Activated naive CD4-positive, alpha-beta T cell treated with anti-CD3 and anti-CD28 coated beads for 36 hours (primary cell): ENCODE measurements at regions of chr10 and their contacts with region 1.

Region 1: DNA sequence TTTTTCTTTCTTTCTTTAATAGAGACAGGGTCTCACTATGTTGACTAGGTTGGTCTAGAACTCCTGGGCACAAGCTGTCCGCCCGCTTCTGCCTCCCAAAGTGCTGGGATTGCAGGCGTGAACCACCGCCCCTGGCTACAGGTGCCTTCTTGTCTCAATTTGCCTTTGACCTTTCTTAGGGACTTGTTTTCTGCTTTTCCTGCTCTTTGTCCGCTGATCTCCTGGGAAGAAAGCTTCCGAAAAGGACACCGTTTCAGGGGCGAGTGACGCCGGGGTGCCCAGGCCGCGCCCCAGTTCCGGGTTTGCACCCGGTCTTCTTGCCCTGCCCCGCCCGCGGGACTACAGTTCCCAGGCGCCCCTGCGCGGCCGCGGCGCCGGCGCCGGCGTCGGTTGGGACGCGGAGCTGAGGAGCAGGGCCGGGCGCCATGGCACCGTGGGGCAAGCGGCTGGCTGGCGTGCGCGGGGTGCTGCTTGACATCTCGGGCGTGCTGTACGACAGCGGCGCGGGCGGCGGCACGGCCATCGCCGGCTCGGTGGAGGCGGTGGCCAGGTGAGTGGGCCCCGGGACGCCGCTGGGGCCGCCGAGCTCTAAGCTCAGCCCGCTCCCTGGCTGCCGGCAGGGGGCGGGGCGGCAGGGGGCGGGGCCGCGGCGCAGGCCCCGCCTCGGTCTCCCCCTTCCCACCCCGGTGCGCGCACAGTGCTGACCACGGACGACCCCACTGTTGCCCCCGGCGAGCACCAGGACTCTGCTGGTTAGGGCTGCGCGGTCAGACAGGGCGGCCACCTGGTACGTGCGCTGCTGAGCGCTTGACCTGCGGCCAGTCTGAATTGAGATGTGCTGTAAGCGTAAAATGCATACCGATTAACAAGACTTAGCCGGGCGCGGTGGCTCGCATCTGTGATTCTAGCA is at the start of gene LHPP:
- DNase-seq: peak; percentile 90
- H3K4me3 Mint-ChIP-seq: peak within 1 kb of the TSS; percentile 77
- H3K27ac Mint-ChIP-seq: peak within 1 kb of the TSS; percentile 88
- H3K4me1 Mint-ChIP-seq: peaks cover 27% of the 10 kb centered on the region
- H3K27me3 Mint-ChIP-seq: peaks cover 2% of the 10 kb centered on the region
- total RNA-seq, gene LHPP: 17.7 TPM

Region 2: DNA sequence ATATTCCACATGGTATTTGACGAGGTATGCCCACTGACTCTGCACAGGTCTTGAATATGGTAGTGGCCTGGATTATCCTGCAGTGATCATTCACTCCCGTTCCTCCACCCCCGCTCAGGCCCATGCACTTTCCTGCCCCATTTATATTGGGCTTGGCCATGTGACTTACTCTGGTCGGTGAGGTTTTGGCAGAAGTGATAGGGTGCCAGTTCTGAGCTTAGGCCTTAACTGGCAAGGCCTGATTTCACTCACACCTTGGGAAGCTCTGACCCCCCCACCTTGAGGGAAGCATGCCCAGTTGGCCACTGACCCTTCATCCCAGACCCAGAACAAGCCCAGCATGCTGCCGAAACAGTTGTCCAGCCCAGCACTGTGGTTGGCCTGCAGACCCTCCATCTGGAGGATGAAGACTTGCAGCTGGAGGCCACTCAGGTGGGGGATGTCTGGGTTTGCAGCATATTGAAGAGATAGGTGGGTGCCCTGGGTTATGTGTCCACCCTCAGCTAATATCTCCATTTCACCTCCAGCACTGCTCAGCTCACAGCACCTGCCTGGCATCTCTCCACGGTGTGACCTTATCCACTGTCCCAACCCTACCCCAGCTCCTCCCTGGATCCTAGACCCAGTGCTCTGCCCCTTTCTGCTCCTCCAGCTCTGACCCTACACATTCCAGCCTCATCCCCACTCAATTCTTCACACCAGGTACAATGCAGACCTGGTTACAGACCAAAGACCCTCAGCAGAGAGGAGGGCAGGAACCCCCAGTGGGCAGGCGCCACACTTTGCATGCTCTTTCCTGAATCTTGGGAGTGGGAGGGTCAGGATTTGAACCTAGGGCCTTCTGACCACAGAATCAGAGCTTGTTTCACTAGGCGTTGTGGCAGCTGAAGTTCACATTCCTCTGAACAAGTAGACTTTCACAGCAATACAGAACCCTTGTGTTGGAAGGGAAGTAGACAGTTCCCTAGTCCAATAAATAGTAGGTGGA is 230.2 kb before region 1 on chr10:
- CTCF ChIA-PET with region 1: no interaction called
- intact Hi-C with region 1: loop called (anchors 5 kb)
- DNase-seq: peak; percentile 79
- H3K4me3 Mint-ChIP-seq: no peak overlapping the region
- H3K27ac Mint-ChIP-seq: no peak overlapping the region
- H3K4me1 Mint-ChIP-seq: no peaks in the 10 kb centered on the region
- H3K27me3 Mint-ChIP-seq: no peaks in the 10 kb centered on the region

Region 3: DNA sequence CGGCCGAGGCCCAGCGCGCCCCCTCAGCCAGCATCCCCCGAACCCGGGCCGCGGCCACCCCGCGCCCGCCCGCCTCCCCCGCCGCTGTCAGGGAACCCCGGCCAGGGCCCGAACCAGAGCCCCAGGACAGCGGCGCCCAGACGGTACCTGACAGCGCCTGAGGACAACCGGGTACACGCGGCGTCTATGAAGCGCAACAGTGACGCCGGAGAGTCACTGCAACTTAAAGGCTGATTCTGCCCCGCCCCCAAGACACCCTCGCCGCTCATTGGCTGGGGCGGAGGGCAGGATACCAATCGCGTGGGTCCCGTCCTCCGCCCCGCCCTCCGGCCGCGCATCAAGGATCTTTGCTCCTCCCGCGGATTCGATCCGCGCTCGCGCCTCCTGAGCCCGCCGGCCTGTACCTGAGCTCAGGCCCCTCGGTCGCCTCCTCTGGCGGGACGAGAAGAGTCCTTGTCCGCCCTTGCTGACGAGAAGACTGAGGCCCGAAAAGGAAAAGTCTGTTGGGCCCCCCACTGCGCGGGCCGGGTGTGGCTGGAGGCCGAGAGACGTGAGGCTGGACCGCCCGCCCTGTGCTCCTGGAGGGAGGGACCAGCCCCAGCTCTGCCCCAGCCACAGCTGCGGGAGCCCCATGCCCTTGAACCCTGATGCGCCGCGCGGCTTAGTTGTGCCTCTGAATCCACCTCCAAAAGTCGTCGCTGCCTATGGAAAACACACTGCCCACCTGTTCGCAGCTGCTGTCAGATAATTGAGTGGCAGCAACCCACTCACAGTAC is 42.8 kb before region 1 on chr10 and contains the start of gene OAT:
- CTCF ChIA-PET with region 1: no interaction called
- intact Hi-C with region 1: loop called (anchors 1 kb)
- DNase-seq: peak; percentile 98
- H3K4me3 Mint-ChIP-seq: peak within 1 kb of the TSS; percentile 76
- H3K27ac Mint-ChIP-seq: no peak within 1 kb of the TSS
- H3K4me1 Mint-ChIP-seq: peaks cover 25% of the 10 kb centered on the region
- H3K27me3 Mint-ChIP-seq: no peaks in the 10 kb centered on the region
- total RNA-seq, gene OAT: 37.4 to 41.6 TPM

Region 4: GRCh38 chr10:124916585-124917427 is 455.1 kb after region 1 on chr10:
- CTCF ChIA-PET with region 1: no interaction called
- intact Hi-C with region 1: loop called (anchors 1 kb)
- DNase-seq: peak; percentile 97
- H3K4me3 Mint-ChIP-seq: peak overlapping the region; percentile 83
- H3K27ac Mint-ChIP-seq: peak overlapping the region; percentile 85
- H3K4me1 Mint-ChIP-seq: peaks cover 36% of the 10 kb centered on the region
- H3K27me3 Mint-ChIP-seq: no peaks in the 10 kb centered on the region

Region 5: GRCh38 chr10:125719146-125720001 is 1257.7 kb after region 1 on chr10 and contains the start of gene EDRF1:
- CTCF ChIA-PET with region 1: no interaction called
- intact Hi-C with region 1: loop called (anchors 5 kb)
- DNase-seq: peak; percentile 99
- H3K4me3 Mint-ChIP-seq: peak within 1 kb of the TSS; percentile 88
- H3K27ac Mint-ChIP-seq: peak within 1 kb of the TSS; percentile 98
- H3K4me1 Mint-ChIP-seq: peaks cover 30% of the 10 kb centered on the region
- H3K27me3 Mint-ChIP-seq: no peaks in the 10 kb centered on the region
- total RNA-seq, gene EDRF1: 24.0 to 25.0 TPM

Region 6: DNA sequence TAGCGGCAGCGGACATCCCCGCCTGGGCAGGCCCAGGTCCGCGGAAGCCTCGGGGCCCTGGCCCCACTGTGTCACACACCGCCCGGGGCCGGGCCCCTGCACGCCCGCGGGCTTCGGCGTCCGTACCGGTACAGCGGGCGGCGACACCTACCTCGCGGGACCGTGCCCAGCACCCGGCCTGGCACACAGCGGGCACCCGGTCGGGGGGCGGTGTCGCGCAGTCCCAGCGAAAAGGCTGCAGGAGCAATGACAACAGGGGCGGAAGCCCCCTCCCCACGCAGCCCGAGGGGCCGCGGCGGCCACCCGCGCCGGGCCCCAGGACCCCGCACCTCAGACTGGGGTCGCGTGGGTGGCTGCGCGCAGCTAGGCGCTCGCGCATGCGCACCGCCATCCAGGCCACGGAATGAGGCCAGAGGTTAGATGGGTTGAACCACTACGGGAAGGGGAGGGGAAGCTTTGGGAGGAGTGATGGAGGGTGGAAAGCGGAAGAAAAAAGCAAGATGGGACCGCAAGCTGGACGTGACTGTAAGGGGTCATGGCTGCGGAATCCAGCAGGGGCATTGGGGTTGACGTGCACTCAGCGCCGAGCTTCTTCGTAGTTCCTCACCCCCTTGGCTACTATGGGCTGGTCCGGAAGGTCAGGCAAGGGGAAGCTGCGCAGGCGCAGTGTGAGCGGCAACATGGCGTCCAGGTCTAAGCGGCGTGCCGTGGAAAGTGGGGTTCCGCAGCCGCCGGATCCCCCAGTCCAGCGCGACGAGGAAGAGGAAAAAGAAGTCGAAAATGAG is 1361.4 kb after region 1 on chr10 and contains the starts of genes BCCIP and UROS:
- CTCF ChIA-PET with region 1: no interaction called
- intact Hi-C with region 1: loop called (anchors 10 kb)
- DNase-seq: peak; percentile 90
- H3K4me3 Mint-ChIP-seq: peak within 1 kb of the TSS; percentile 75
- H3K27ac Mint-ChIP-seq: peak within 1 kb of the TSS; percentile 66
- H3K4me1 Mint-ChIP-seq: peaks cover 28% of the 10 kb centered on the region
- H3K27me3 Mint-ChIP-seq: no peaks in the 10 kb centered on the region
- total RNA-seq, gene BCCIP: 103 to 107 TPM
- total RNA-seq, gene UROS: 30.8 to 32.9 TPM